Endothelial cell of umbilical vein (primary cell): ENCODE measurements at regions of chr11 and their contacts with region 1.

Region 1: DNA sequence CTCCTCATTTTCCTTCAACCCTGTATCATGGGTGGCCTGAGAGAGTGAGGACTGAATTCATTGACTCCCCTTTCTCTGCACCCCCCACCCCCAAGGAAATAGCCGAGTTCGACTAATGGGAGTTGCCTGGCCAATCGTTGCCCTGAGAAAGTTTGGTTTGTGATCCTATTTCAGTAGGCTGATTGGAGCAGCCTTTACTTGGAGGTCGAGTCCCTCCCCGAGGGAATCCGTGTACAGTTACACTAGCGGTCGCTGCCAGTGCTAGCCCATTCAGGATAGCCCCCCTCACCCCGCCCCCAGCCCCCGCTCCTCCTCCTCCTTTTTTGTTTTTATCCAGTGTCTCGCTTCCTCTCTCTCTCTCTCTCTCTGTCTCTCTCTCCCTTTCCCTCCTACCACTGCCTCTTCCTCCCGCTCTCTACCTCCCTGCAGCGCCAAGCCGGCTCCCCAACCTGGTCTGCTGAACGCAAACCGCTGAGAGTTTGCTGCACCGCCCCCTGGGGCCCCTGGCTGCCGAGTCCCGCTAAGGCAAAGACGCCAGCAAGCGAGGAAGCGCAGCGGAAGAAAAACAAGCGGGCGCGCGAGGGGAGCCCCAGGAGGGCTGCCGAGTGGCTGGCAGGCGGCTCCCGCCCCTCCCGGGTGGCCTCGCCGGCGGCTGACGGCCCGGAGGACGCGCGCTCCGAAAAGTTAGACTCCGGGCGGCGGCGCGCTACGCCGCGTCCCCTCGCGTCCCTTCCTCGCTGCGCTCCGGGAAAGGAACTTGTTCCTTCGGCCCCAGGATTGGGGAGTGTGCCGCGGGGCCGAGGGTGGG is at the start of gene GRAMD1B:
- DNase-seq: peak; percentile 66
- H3K4me3 ChIP-seq: peak within 1 kb of the TSS; percentile 37 to 63 (median 61)
- H3K27ac ChIP-seq: peak within 1 kb of the TSS; percentile 3
- H3K4me1 ChIP-seq: peaks cover 11% of the 10 kb centered on the region
- H3K27me3 ChIP-seq: peaks cover 14% of the 10 kb centered on the region in 2 experiments
- CTCF ChIP-seq: peak in 1 of 2 donors; percentile 25
- POLR2A ChIP-seq: no peak
- total RNA-seq, gene GRAMD1B: 6.8 and 11.1 TPM in 2 replicates

Region 2: GRCh38 chr11:122874991-122875390 is 555.1 kb before region 1 on chr11:
- CTCF ChIA-PET with region 1: no interaction called
- POLR2A ChIA-PET with region 1: no interaction called
- dilution Hi-C with region 1: no loop called
- intact Hi-C with region 1: loop called (anchors 10 kb)
- DNase-seq: no peak
- H3K4me3 ChIP-seq: no peak overlapping the region
- H3K27ac ChIP-seq: no peak overlapping the region
- H3K4me1 ChIP-seq: no peaks in the 10 kb centered on the region
- H3K27me3 ChIP-seq: peaks cover 2 to 4% of the 10 kb centered on the region in 2 experiments
- CTCF ChIP-seq: no peak
- POLR2A ChIP-seq: no peak

Region 3: GRCh38 chr11:123301696-123302400 is 128.3 kb before region 1 on chr11:
- CTCF ChIA-PET with region 1: interaction called, 8 read pairs
- POLR2A ChIA-PET with region 1: no interaction called
- dilution Hi-C with region 1: no loop called
- intact Hi-C with region 1: loop called (anchors 1 kb)
- DNase-seq: peak; percentile 43
- H3K4me3 ChIP-seq: peak overlapping the region in 2 of 3 experiments; percentile 15 to 29
- H3K27ac ChIP-seq: no peak overlapping the region
- H3K4me1 ChIP-seq: peaks cover 17% of the 10 kb centered on the region
- H3K27me3 ChIP-seq: peaks cover 4 to 6% of the 10 kb centered on the region in 2 experiments
- CTCF ChIP-seq: peak; percentile 81 to 84
- POLR2A ChIP-seq: no peak

Region 4: DNA sequence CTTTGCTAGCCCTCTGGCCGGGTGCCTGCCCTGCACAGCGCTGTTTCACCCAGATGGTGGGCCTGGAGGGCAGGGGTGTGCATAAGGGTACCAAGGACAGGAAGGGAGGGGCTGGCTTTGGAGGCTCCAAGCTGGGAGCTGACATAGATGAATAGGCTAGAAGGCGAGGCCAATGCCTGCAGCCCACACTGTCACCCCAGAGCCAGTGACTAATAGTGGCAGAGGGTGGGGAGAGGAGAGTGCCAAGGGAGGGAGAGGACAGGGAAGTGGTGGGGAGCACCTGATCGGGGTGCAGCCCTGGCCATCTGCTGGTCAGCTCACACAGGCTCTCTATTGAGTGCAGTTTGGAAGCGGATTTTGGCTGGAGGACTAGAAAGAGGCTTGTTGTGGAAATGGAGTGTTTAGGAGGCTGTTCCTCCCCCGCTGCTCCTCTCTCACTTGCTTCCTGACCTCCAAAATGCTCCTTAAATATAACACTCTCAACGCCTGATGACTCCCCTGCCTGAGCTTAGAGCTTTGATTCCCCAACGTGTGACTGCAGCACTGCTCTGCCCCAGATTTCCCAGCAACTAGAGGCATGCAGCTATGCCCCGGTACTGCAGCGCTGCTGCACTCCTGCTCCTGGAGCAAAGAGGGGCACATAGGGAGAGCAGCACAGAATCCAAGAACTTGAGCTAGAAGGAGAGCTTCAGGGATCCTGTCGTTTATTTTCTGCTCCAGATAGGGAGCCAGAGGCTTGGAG is 89.1 kb after region 1 on chr11:
- CTCF ChIA-PET with region 1: no interaction called
- POLR2A ChIA-PET with region 1: no interaction called
- dilution Hi-C with region 1: no loop called
- intact Hi-C with region 1: no loop called
- DNase-seq: no peak
- H3K4me3 ChIP-seq: no peak overlapping the region
- H3K27ac ChIP-seq: no peak overlapping the region
- H3K4me1 ChIP-seq: no peaks in the 10 kb centered on the region
- H3K27me3 ChIP-seq: peaks cover 0 to 3% of the 10 kb centered on the region in 2 experiments
- CTCF ChIP-seq: no peak
- POLR2A ChIP-seq: no peak